ENCODE measurements at regions of chr4 and their contacts with region 1.

Region 1: GRCh38 chr4:176377780-176378179 is 58.0 kb downstream of the SPCS3 start:
- DNase-seq: no peak
- ATAC-seq: no peak
- H3K4me3 ChIP-seq: no peak overlapping the region
- H3K27ac ChIP-seq: no peak overlapping the region
- H3K4me1 ChIP-seq: peaks cover 3% of the 10 kb centered on the region; the same call in 1 of the 2 replicates
- H3K27me3 ChIP-seq: no peaks in the 10 kb centered on the region
- CTCF ChIP-seq: peak; percentile 48; the same call in 1 of the 2 replicates

Region 2: DNA sequence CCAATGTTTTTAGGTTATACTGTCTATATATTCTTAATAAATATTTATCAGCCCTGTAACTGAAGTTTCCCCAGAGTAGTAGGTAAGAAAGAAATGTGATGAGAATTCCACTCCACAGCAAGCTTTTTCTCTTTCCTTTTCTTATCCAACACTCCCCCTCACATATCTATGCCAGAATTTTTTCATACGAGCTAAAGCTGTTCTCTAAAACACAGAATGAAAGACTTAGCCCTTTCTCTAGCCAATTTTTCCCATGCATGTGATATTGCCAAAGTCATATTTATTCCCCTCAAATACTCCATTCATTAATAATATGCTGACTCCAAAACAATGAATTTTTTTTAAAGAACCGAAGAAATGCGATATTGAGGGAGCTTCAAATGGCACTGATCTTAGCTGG is 382.7 kb after region 1 on chr4:
- CTCF ChIA-PET with region 1: no interaction called
- POLR2A ChIA-PET with region 1: no interaction called
- in situ Hi-C with region 1: no loop called
- intact Hi-C with region 1: loop called (anchors 5 kb)
- DNase-seq: no peak
- ATAC-seq: no peak
- H3K4me3 ChIP-seq: no peak overlapping the region
- H3K27ac ChIP-seq: no peak overlapping the region
- H3K4me1 ChIP-seq: peaks cover 7% of the 10 kb centered on the region
- H3K27me3 ChIP-seq: no peaks in the 10 kb centered on the region
- CTCF ChIP-seq: no peak

Region 3: DNA sequence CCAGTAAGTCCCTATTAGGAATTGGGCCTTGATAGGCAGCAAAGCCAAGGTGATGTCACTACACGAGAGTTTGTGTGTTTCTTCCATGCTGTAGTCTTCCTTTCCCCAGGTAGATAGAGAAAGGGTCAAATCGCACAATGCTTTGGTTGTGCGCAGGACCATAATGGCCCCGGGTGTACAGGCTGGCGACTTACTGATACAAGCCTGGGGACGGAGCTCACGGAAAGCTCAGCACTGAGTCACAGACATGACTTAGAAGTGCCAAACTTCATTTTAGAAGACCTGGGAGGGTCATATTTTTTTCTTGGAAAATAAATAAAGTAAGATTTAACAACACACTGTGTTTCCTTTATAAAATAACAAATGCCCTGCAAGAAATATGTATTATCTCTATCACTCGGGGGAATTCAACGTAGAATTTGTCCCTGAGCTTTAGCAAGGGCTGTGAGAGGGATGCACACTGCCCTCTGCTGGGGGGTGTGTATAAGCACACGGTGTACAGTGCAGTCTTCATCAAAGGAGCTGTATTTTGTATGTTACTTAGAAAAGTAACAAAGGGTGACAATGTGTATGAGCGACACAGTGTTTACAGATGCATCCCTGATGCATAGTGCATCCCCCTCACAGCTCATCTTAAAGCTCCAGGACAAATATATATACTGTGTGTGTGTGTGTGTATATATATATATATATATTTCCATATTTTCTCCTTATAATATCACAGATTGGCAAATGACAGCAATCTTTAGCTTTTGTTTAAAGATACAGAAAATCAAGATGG is 669.5 kb after region 1 on chr4:
- CTCF ChIA-PET with region 1: interaction called, 3 read pairs
- POLR2A ChIA-PET with region 1: no interaction called
- in situ Hi-C with region 1: no loop called
- intact Hi-C with region 1: loop called (anchors 2 kb)
- DNase-seq: peak; percentile 53
- ATAC-seq: peak; percentile 97
- H3K4me3 ChIP-seq: no peak overlapping the region
- H3K27ac ChIP-seq: peak overlapping the region; percentile 51; the same call in 1 of the 2 replicates
- H3K4me1 ChIP-seq: no peaks in the 10 kb centered on the region
- H3K27me3 ChIP-seq: no peaks in the 10 kb centered on the region
- CTCF ChIP-seq: peak; percentile 74

Region 4: GRCh38 chr4:177339477-177340374 is 961.9 kb after region 1 on chr4:
- CTCF ChIA-PET with region 1: no interaction called
- POLR2A ChIA-PET with region 1: no interaction called
- in situ Hi-C with region 1: no loop called
- intact Hi-C with region 1: loop called (anchors 10 kb)
- DNase-seq: no peak
- ATAC-seq: peak; percentile 81
- H3K4me3 ChIP-seq: no peak overlapping the region
- H3K27ac ChIP-seq: no peak overlapping the region
- H3K4me1 ChIP-seq: no peaks in the 10 kb centered on the region
- H3K27me3 ChIP-seq: no peaks in the 10 kb centered on the region
- CTCF ChIP-seq: peak; percentile 59; the same call in 1 of the 2 replicates